AG04449 (cell line): ENCODE measurements at regions of chr4 and their contacts with region 1.

Region 1: DNA sequence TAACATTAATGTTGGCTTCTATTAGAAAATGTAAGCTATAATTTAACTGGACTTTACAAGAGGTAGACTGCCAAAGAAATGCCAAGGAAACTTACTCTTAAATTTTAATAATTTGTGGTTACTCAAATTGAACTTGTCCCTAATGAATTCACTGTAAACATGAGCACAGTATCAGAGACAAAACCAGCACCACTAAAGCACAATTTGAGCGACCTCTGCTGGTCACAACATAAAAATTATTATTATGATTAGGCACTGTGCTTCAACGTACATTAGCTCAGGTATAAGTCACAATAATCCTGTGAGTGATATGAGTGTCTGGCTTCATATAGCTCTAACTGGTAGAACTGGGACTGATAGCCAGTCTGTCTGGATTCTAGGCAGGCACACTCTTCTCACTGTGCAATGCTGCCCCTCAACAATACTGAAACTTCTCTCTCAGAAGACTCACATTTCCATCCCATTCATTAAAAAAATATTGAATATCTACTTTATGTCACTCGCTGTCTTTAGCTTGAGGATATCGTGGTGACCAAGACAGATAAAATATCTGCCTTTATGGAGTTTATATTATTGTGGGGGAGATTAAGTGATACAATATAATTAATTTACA is 8.0 kb downstream of the NUDT6 start:
- DNase-seq: no peak
- H3K4me3 ChIP-seq: no peak overlapping the region
- CTCF ChIP-seq: peak; percentile 26

Region 2: GRCh38 chr4:122577808-122578781 is 336.3 kb before region 1 on chr4:
- CTCF ChIA-PET with region 1: interaction called, 10 read pairs
- POLR2A ChIA-PET with region 1: no interaction called
- DNase-seq: peak; percentile 16
- H3K4me3 ChIP-seq: no peak overlapping the region
- CTCF ChIP-seq: peak; percentile 67

Region 3: DNA sequence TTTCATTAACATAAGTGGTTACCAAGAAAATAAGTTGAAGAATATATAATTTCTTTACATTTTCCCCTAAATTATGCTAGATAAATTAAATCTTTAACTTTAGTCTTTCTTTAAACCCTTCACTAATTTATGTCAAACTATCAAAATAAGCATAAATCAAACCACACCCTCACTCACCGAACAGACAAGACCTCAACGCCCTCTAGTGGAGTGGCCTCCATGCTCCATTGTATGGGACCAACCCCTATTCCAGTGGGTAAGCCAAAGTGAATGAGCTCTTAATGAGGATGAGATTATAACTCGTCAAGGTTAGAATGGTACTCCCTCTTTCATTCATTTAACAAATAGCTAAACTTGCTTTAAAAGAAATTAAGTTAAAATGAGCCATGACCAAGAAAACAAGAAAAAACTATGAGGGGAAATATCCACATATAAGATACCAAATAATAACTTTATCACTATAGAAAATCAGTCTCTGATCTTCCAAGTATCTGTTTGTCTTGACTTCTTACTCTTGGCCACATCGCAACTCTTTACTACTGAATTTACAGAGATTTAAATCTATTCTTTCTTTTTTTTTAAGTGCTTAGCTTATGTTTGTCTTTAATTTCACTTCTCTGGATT is 197.5 kb before region 1 on chr4:
- CTCF ChIA-PET with region 1: interaction called, 29 read pairs
- POLR2A ChIA-PET with region 1: no interaction called
- DNase-seq: no peak
- H3K4me3 ChIP-seq: no peak overlapping the region
- CTCF ChIP-seq: peak; percentile 83

Region 4: GRCh38 chr4:122744229-122744628 is 170.2 kb before region 1 on chr4:
- CTCF ChIA-PET with region 1: interaction called, 12 read pairs
- POLR2A ChIA-PET with region 1: no interaction called
- DNase-seq: peak; percentile 69
- H3K4me3 ChIP-seq: no peak overlapping the region
- CTCF ChIP-seq: no peak

Region 5: DNA sequence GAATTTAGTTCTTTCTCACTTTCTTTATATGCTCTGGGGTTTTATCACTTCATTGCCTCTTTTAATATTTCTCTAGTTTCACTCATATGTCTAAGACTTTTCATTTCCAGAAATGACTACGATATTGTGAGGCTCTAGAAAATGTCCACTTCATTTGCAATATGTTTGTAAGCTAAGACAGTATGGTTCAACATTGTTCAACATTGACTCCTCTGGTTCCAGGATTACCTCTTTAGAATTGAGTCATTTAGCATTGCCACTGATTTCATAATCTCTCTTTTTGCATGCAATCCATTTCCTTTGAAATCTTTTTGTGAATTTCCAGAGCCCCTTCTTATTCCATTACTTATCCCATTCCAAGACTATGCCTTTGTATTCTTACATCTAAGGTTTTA is 149.6 kb before region 1 on chr4:
- CTCF ChIA-PET with region 1: interaction called, 114 read pairs
- POLR2A ChIA-PET with region 1: no interaction called
- DNase-seq: peak; percentile 72
- H3K4me3 ChIP-seq: peak overlapping the region; percentile 10
- CTCF ChIP-seq: no peak

Region 6: GRCh38 chr4:122854447-122855352 is 59.7 kb before region 1 on chr4:
- CTCF ChIA-PET with region 1: interaction called, 14 read pairs
- POLR2A ChIA-PET with region 1: no interaction called
- DNase-seq: no peak
- H3K4me3 ChIP-seq: no peak overlapping the region
- CTCF ChIP-seq: no peak

Region 7: GRCh38 chr4:122930862-122931261 is 16.5 kb after region 1 on chr4:
- CTCF ChIA-PET with region 1: interaction called, 10 read pairs
- POLR2A ChIA-PET with region 1: no interaction called
- DNase-seq: no peak
- H3K4me3 ChIP-seq: no peak overlapping the region
- CTCF ChIP-seq: no peak

Region 8: GRCh38 chr4:123083646-123084045 is 169.2 kb after region 1 on chr4:
- CTCF ChIA-PET with region 1: no interaction called
- POLR2A ChIA-PET with region 1: no interaction called
- DNase-seq: no peak
- H3K4me3 ChIP-seq: no peak overlapping the region
- CTCF ChIP-seq: no peak